Activated CD4-positive, alpha-beta T cell treated with anti-CD3 and anti-CD28 coated beads, Interleukin-2, amount 10 ng/mL, durations not matched to agents 24 days and 14 days (primary cell): ENCODE measurements at regions of chr1 and their contacts with region 1.

Region 1: DNA sequence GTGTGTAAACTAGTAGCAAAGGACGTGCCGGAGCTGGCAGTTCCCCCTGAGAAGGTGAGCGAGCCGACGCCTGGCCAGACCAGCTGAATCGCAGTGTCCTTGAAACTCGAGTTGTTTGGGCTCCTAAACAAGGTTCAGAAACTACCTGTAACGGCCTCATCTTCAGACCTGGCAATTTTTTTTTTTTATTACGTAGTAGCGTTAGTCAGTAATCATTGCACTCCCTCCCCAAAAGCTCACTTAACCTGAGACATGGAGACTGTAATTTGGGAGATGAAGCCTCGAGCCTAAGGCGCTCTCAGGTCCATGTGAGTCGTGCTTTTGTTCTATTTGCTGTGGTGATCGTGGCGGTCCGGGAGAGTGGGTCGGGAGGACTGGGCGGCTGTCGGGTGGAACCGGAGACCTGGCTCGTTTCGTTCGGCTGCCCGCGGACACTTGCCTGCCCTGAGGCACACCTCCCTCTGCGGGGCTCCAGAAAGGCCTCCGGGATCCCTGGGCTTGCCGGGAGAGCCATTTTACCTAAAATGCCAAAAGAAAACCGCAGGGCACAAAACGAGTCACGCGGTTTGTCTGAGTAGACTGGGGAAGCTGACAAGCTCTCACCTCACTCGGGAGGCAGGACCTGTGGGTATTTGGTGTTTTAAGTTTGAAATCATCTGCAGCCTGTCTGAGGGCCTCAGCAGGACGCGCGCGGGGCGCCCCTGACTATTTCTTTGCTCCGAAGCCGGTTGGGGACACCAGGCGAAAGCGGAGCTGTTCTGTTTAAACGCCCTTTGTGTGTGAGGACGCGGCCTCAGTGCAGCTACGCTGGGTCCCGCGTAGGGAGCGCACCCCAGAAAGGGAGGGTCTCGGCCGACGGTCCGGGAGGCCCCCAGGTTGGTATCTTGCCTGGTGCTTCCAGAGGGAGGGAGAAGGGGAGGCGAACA is 722 bp downstream of the LHX8 start:
- DNase-seq: peak; percentile 65
- H3K4me3 Mint-ChIP-seq: peak overlapping the region; percentile 81
- H3K27ac Mint-ChIP-seq: peak overlapping the region; percentile 38
- H3K4me1 Mint-ChIP-seq: peaks cover 9% of the 10 kb centered on the region
- H3K27me3 Mint-ChIP-seq: peaks cover 82% of the 10 kb centered on the region

Region 2: DNA sequence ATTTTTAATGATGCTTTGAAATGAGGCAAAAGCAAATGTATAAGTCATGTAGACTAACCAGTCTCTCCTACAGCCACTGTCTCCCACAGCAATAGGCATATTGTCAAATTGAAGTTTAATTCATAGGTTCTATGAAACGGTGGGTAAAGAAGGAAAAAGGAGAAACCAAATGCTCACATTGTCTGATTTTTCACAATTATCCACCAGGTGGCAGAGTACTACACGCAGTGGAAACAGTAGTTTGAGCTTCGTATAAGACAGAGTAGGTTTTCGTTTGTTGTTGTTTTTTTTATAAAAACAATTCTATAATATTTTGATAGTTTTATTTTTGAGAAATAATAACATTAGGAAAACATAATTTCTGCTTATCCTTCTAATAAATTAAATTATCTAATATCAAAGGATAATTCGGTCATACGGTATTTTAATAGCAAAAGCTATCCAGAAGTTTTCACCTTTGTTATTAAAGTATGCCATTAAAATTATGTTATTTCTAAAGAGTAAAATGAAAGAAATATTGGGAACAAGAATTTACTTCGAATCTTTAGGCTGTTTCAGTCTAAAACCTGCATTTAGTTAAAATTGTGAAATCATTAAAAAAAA is 362.9 kb before region 1 on chr1:
- intact Hi-C with region 1: loop called (anchors 10 kb)
- DNase-seq: peak; percentile 74
- H3K4me3 Mint-ChIP-seq: no peak overlapping the region
- H3K27ac Mint-ChIP-seq: no peak overlapping the region
- H3K4me1 Mint-ChIP-seq: no peaks in the 10 kb centered on the region
- H3K27me3 Mint-ChIP-seq: peaks cover 10% of the 10 kb centered on the region

Region 3: GRCh38 chr1:75097654-75098053 is 37.3 kb before region 1 on chr1:
- intact Hi-C with region 1: no loop called
- DNase-seq: no peak
- H3K4me3 Mint-ChIP-seq: no peak overlapping the region
- H3K27ac Mint-ChIP-seq: no peak overlapping the region
- H3K4me1 Mint-ChIP-seq: no peaks in the 10 kb centered on the region
- H3K27me3 Mint-ChIP-seq: no peaks in the 10 kb centered on the region

Region 4: DNA sequence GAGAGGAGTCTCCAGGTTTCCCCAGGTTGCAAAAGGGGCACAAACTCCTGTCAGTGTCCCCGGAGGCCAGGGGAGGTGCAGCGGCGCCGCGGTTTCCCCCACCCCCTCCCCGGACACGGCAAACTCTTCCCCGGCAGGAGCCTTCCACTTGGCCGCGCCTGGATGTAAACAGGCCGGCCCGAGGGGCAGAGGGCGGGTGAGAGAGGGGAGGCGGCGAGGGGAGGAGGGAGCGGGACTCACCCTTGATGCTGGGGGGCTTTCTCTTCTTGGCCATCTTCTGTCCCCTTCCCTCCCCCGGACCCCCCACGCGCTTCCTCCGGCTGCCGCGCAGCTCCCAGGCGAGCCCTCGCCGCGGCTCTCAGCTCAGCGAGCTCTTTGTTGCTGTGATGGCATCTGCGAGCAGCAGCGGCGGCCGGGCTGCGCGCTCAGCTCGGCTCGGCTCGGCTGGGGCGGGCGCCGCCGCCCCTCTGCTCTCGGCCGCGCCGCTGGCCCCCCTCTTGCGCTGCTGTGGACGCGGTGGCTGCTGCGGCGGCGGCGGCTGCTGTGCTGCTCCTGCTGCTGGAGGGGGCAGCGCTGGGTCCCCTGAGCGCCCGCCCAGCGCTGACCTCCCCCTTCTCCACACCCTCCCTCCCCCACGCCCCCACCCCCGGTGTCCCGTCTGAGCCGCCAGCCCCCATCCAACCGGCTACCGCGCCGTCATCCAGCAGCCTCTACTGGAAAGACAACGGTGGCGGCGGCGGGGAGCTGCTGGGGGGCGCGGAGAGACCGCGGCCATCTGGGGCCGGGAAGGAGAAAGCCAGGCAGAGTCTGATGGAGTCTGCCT is 480.9 kb after region 1 on chr1:
- intact Hi-C with region 1: loop called (anchors 10 kb)
- DNase-seq: peak; percentile 63
- H3K4me3 Mint-ChIP-seq: peak overlapping the region; percentile 60
- H3K27ac Mint-ChIP-seq: no peak overlapping the region
- H3K4me1 Mint-ChIP-seq: peaks cover 8% of the 10 kb centered on the region
- H3K27me3 Mint-ChIP-seq: peaks cover 65% of the 10 kb centered on the region